ENCODE measurements at regions of chr6 and their contacts with region 1.

Region 1: GRCh38 chr6:21593412-21593926 is at the start of gene SOX4:
- DNase-seq: peak; percentile 96
- H3K4me3 ChIP-seq: peak within 1 kb of the TSS; percentile 73 to 79
- H3K27ac ChIP-seq: peak within 1 kb of the TSS; percentile 91
- H3K4me1 ChIP-seq: no peaks in the 10 kb centered on the region
- H3K27me3 ChIP-seq: no peaks in the 10 kb centered on the region
- CTCF ChIP-seq: no peak
- POLR2A ChIP-seq: peak; percentile 94
- total RNA-seq, gene SOX4: 41.7 to 44.1 TPM

Region 2: DNA sequence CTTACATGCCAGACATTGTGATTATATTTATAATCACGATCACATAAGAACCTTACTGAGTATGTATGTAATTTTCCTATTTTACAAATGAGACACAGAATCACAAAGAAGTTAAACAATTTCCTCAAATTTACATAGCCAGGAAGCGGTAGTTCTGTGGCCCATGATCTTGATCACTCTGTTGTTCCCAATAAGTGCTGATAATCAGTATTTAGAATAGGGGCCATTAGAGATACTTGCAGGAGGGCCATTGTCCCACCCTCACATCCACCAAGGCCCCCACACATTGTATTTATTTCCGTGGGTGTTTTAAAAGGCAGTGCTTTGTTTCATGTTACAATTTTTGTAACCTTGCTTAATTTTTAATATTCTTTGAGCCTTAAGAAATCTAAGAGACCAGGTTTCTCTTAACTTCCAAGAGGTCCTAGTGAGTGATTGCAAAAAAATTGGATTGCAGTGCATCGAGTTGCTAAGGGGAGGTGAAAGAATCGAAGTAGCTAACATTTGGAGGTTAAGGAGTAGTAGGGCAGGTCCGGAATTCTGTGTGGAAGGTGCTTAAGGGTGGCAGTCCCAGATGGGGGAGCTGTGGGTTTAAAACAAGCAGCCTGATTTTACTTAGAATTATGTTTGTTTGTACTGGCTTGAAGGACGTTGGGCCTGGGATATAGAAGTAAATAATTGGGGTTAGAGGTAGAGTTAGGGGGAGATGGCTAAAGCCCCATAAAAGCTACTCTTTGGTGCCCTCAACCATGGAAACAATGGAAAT is 719.9 kb before region 1 on chr6:
- intact Hi-C with region 1: loop called (anchors 5 kb)
- DNase-seq: no peak
- H3K4me3 ChIP-seq: no peak overlapping the region
- H3K27ac ChIP-seq: no peak overlapping the region
- H3K4me1 ChIP-seq: no peaks in the 10 kb centered on the region
- H3K27me3 ChIP-seq: no peaks in the 10 kb centered on the region
- CTCF ChIP-seq: no peak
- POLR2A ChIP-seq: no peak

Region 3: GRCh38 chr6:21478863-21479539 is 114.5 kb before region 1 on chr6:
- intact Hi-C with region 1: no loop called
- DNase-seq: peak; percentile 30
- H3K4me3 ChIP-seq: peak overlapping the region; percentile 9 to 22
- H3K27ac ChIP-seq: peak overlapping the region; percentile 2 to 34
- H3K4me1 ChIP-seq: no peaks in the 10 kb centered on the region
- H3K27me3 ChIP-seq: no peaks in the 10 kb centered on the region
- CTCF ChIP-seq: no peak
- POLR2A ChIP-seq: no peak

Region 4: GRCh38 chr6:21664314-21665109 is 71.0 kb after region 1 on chr6:
- intact Hi-C with region 1: loop called (anchors 5 kb)
- DNase-seq: peak; percentile 20
- H3K4me3 ChIP-seq: peak overlapping the region; percentile 36 to 37
- H3K27ac ChIP-seq: peak overlapping the region; percentile 57
- H3K4me1 ChIP-seq: no peaks in the 10 kb centered on the region
- H3K27me3 ChIP-seq: no peaks in the 10 kb centered on the region
- CTCF ChIP-seq: no peak
- POLR2A ChIP-seq: no peak

Region 5: DNA sequence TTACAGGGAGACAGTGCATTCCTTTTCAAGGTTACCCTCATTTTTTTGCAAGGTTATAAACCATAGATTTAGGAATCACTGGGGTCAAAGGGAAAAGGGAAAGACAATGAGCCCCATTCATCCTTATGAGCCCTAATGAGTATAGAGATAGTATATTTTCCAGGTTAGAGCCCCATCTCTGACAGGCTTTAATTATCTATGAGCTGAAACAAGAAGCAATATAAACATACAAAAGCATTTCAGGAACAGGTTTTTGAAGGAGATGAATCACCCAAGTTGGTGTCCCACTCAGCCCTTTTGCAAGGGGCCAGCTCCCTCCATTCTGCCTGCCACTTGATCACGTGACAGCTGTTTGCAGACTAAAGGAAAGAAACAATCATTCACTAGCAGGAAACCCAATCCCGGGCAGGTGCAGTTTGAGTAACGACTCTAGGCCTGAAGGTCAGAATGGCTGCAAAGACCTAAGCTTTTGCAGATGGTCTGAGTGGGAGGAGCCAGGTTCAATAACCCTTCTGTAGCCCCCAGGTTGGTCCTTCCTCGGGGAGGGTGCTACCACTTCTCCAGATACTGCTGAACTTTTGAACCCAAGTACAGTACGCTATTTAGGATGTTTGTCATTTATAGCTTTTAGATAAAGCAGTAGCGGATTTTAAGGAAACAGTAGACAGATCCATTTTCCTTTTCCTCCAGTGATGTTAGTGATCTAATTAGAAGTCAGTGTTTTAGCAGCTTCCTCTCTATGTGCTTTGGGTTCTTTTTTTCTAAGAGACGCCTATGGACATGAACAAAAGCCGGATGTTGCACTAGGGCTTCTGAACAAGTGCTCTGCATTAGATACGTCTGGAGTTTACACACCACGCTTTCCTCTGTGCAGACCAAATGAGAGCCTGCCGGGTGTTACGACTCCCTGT is 253.3 kb after region 1 on chr6:
- intact Hi-C with region 1: loop called (anchors 10 kb)
- DNase-seq: no peak
- H3K4me3 ChIP-seq: no peak overlapping the region
- H3K27ac ChIP-seq: no peak overlapping the region
- H3K4me1 ChIP-seq: no peaks in the 10 kb centered on the region
- H3K27me3 ChIP-seq: no peaks in the 10 kb centered on the region
- CTCF ChIP-seq: no peak
- POLR2A ChIP-seq: no peak

Region 6: DNA sequence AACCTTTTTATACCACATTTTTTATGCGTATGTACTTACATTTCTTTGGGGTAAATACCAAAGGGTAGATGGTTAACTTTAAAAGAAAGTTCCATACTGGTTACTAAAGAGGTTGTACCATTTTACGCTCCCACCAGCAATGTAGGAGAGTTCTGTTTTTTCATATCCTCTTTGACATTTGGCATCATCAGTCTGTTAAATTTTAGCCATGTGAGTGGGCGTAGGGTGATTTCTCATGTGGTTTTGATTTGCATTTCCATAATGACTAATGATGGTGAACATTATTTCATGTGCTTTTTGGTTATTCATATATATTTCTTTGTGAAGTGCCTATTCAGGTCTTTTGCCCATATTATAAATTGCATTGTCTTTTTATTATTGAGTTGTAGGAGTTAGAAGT is 509.2 kb after region 1 on chr6:
- intact Hi-C with region 1: no loop called
- DNase-seq: no peak
- H3K4me3 ChIP-seq: no peak overlapping the region
- H3K27ac ChIP-seq: no peak overlapping the region
- H3K4me1 ChIP-seq: no peaks in the 10 kb centered on the region
- H3K27me3 ChIP-seq: no peaks in the 10 kb centered on the region
- CTCF ChIP-seq: no peak
- POLR2A ChIP-seq: no peak

Region 7: GRCh38 chr6:22145823-22146677 is 552.6 kb after region 1 on chr6:
- intact Hi-C with region 1: loop called (anchors 2 kb)
- DNase-seq: no peak
- H3K4me3 ChIP-seq: no peak overlapping the region
- H3K27ac ChIP-seq: no peak overlapping the region
- H3K4me1 ChIP-seq: no peaks in the 10 kb centered on the region
- H3K27me3 ChIP-seq: no peaks in the 10 kb centered on the region
- CTCF ChIP-seq: peak in 2 of 4 experiments; percentile 37 to 41
- POLR2A ChIP-seq: no peak

Region 8: DNA sequence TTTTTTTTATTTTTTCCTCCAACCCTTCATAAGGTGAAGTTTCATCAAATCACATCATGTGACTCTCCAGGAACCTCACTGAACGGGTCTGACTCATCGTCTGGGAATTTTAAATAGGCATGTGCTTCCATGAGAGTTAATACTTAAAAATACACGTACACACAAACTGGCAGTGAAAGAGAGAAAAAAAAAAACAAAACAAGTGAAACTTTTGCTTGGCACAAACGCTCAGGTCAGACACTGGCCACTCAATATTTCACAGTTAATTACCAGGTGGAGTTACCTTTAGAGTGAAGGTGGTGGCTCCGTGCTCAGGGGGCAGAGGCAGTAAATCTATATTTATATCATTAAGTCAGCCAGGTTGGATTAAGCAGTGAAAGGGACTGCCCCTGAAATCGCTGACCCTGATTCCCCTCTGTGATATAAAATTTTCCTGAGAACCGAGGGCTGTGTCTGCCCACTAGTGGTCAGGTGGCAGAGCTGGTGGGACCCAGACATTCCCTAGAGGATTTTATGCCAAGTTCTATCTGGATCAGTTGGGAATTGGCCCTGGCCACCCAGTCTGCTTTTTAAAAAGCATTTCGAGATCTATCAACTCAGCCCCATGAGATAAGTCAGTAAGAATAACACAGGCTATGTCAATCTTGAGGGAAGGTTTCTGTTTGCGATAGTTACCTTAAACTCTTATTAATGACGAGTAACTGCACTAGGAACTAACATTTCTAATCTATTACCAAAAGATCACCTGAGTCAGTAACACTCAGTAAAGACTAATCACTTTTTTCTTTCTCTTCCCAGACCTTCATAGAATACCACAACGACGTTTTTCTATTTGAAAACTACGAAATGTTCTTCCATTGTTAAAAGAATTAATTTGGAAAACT is 1235.0 kb after region 1 on chr6:
- intact Hi-C with region 1: loop called (anchors 10 kb)
- DNase-seq: peak; percentile 73
- H3K4me3 ChIP-seq: no peak overlapping the region
- H3K27ac ChIP-seq: peak overlapping the region; percentile 26 to 48
- H3K4me1 ChIP-seq: peaks cover 5% of the 10 kb centered on the region
- H3K27me3 ChIP-seq: no peaks in the 10 kb centered on the region
- CTCF ChIP-seq: peak in 2 of 4 experiments; percentile 50 to 68
- POLR2A ChIP-seq: no peak

Measured in prostate gland (tissue), 2 donors.